ENCODE measurements at regions of chr9 and their contacts with region 1.

Region 1: DNA sequence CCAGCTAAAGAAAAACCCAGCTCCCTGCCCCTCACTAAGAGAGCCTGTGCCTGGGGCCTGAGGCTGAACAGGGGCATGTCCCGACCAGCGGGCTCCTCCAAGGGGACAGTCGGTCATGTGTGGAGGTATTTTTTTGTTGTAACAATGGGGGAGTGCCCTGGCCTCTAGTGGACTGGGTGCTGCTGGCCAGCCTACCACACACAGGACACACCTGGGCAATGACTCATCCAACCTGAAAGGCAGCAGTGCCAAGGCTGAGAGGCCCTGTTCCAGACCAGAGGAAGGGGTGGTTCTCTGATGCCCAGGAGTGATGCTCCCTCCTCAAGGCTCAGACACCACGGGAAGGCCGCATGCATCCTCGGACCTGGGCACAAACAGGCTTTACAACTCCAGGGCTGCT is 181.5 kb downstream of the OLFM1 start:
- DNase-seq: no peak
- H3K4me3 ChIP-seq: no peak overlapping the region
- H3K27ac ChIP-seq: no peak overlapping the region
- H3K4me1 ChIP-seq: no peaks in the 10 kb centered on the region
- H3K27me3 ChIP-seq: no peaks in the 10 kb centered on the region
- CTCF ChIP-seq: no peak

Region 2: GRCh38 chr9:135204177-135204576 is 64.8 kb before region 1 on chr9:
- intact Hi-C with region 1: no loop called
- DNase-seq: no peak
- H3K4me3 ChIP-seq: no peak overlapping the region
- H3K27ac ChIP-seq: no peak overlapping the region
- H3K4me1 ChIP-seq: no peaks in the 10 kb centered on the region
- H3K27me3 ChIP-seq: peaks cover 4% of the 10 kb centered on the region
- CTCF ChIP-seq: no peak

Region 3: DNA sequence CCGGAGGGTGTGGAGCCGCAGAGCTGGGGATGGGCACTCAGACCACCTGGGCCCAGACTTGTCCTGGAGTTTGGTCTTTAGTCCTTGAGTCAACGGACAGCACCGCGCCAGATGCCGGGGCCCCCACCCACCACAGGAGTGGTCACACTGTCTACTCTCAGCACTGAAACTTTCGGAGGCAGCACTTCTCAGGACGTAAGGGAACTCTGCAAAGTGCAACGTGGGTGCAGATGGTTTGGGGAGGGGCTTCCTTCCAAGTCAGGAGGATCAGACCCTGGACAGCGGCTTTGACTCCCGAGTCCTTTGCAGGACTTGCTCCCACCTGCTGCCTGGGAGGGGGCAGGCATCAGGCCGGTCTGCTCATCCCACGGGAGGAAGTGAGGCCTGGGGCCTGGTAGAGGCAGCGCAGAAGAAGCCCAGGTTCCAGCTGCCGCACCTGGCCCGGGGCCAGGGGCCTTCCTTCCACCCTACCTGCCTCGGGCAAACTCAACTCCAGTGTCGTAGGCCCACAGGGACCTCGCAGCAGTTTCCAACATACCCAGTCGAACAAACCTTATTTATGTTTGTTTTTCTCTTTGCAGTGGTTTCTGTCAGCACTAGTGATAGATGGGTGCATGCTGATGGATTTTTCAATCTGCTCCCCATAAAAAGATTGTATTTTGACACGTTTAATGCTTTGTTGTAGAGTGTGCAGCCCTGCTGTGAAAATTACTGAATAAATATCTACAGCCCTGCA is 60.8 kb after region 1 on chr9:
- intact Hi-C with region 1: loop called (anchors 5 kb)
- DNase-seq: peak; percentile 47 to 69 (median 56)
- H3K4me3 ChIP-seq: no peak overlapping the region
- H3K27ac ChIP-seq: no peak overlapping the region
- H3K4me1 ChIP-seq: no peaks in the 10 kb centered on the region
- H3K27me3 ChIP-seq: no peaks in the 10 kb centered on the region
- CTCF ChIP-seq: no peak

Region 4: GRCh38 chr9:135422341-135422944 is 153.5 kb after region 1 on chr9:
- intact Hi-C with region 1: no loop called
- DNase-seq: no peak
- H3K4me3 ChIP-seq: no peak overlapping the region
- H3K27ac ChIP-seq: no peak overlapping the region
- H3K4me1 ChIP-seq: no peaks in the 10 kb centered on the region
- H3K27me3 ChIP-seq: no peaks in the 10 kb centered on the region
- CTCF ChIP-seq: no peak

Measured in kidney (tissue), 22 donors.